ENCODE measurements at regions of chr9 and their contacts with region 1.

Region 1: GRCh38 chr9:6757456-6758247 is at the start of gene KDM4C:
- DNase-seq: peak; percentile 97
- ATAC-seq: peak; percentile 86
- H3K4me3 Mint-ChIP-seq: peak within 1 kb of the TSS; percentile 93
- H3K27ac Mint-ChIP-seq: peak within 1 kb of the TSS; percentile 100
- H3K4me1 Mint-ChIP-seq: peaks cover 22% of the 10 kb centered on the region
- H3K27me3 Mint-ChIP-seq: no peaks in the 10 kb centered on the region
- total RNA-seq, gene KDM4C: 75.2 to 77.1 TPM

Region 2: DNA sequence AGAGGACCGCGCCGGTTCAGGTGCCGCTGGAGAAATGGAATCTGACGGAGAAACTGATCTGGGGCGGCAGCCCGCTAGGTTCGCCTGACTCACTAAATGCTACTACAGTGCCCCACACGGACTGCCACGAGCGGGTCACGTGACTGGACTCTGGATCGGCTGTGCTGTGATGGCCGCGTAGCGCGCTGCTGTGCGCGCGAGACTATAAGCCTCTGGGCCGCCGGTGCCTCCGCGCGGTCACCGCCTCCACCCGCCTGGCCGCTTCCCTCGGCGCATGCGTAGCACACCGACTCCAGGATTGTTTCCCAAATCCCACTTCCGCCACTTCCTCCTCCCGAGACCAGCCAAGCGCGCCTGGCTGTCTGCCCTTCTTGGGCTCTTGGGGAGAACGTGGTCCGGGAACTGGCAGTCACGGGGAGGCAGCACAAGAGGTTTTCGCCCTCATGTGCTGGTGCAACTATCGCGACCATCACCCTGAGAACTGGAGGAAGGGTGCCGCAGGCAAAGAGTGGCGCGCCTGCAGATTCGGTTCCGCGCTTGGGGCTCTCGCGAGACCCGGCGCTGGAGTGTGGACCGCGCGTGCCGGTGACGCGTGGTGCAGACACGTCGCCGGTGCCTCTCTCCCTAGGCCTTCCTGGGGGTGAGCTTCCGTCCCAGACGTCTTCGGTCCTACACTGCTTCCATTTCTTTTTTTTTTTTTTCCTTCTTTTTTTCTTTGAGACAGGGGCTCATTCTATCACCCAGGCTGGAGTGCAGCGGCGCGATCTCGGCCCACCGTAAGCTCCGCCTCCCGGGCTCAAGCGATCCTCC is 76.3 kb before region 1 on chr9:
- POLR2A ChIA-PET with region 1: interaction called, 55 read pairs
- DNase-seq: peak; percentile 90
- ATAC-seq: peak; percentile 92
- H3K4me3 Mint-ChIP-seq: peak overlapping the region; percentile 91
- H3K27ac Mint-ChIP-seq: peak overlapping the region; percentile 99
- H3K4me1 Mint-ChIP-seq: peaks cover 17% of the 10 kb centered on the region
- H3K27me3 Mint-ChIP-seq: no peaks in the 10 kb centered on the region

Region 3: DNA sequence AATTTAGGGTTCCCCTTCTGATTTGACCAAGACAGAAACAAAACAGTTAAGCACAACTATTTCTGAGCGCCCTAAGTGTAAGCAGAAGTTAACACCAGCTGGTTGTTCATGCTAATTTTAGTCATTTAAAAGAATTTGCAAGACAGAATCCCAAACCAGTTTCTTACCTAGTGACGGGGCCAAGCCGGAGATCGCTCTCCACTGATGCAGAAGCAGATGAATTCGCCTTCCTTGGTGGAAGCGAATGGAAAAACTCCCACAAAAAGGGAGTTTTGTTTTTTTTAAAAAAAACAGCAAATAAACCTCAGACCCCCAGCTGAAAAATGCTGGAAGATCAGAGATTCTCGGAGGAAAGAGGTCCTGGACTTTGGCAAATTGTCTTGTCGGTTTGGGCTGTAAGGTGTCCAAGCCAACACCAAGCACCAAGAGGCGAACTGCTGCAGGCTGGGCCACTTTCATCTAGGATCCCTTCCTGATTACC is 64.7 kb before region 1 on chr9:
- POLR2A ChIA-PET with region 1: no interaction called
- DNase-seq: no peak
- ATAC-seq: no peak
- H3K4me3 Mint-ChIP-seq: no peak overlapping the region
- H3K27ac Mint-ChIP-seq: no peak overlapping the region
- H3K4me1 Mint-ChIP-seq: peaks cover 6% of the 10 kb centered on the region
- H3K27me3 Mint-ChIP-seq: no peaks in the 10 kb centered on the region

Region 4: DNA sequence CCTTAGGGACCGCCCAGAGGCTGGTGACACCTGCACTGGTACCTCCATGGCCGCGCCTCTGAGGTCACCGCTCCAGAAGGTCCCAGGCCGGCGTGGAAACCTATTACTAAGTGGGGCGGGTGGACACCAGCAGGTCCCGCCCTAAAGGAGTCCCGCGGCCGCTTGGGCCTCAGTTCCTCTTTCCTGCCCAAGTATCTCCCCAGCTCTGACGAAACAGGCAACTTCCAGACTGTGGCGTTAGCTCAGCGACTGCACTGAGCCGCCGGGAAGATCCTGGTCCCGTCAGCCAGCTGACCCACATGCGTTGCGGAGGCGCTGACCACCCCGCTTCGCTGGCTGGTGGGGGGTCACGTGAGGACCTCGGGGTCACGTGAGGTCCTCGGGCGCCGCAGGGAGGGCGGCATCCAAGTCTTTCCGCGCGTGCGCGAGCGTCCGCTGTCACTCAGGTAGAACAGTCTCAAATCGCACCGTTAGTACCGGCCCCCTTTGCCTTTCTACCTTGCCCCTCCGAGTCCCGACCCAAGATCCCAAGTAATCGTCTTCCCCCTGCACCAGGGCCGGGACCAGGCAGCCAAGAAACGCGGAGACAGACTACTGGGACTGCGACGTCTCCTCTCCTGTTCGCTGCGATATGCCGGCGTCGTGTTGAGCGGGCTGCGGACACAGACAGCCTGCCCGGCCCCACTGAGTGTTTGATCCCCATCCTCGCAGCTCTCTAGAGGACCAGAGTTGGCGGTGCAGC is 53.6 kb before region 1 on chr9:
- POLR2A ChIA-PET with region 1: interaction called, 28 read pairs
- DNase-seq: peak; percentile 89
- ATAC-seq: peak; percentile 92
- H3K4me3 Mint-ChIP-seq: peak overlapping the region; percentile 94
- H3K27ac Mint-ChIP-seq: peak overlapping the region; percentile 93
- H3K4me1 Mint-ChIP-seq: peaks cover 13% of the 10 kb centered on the region
- H3K27me3 Mint-ChIP-seq: no peaks in the 10 kb centered on the region

Region 5: GRCh38 chr9:6715755-6716643 is 41.7 kb before region 1 on chr9:
- POLR2A ChIA-PET with region 1: interaction called, 67 read pairs
- DNase-seq: peak; percentile 83
- ATAC-seq: peak; percentile 93
- H3K4me3 Mint-ChIP-seq: peak overlapping the region; percentile 85
- H3K27ac Mint-ChIP-seq: peak overlapping the region; percentile 92
- H3K4me1 Mint-ChIP-seq: peaks cover 6% of the 10 kb centered on the region
- H3K27me3 Mint-ChIP-seq: no peaks in the 10 kb centered on the region

Region 6: DNA sequence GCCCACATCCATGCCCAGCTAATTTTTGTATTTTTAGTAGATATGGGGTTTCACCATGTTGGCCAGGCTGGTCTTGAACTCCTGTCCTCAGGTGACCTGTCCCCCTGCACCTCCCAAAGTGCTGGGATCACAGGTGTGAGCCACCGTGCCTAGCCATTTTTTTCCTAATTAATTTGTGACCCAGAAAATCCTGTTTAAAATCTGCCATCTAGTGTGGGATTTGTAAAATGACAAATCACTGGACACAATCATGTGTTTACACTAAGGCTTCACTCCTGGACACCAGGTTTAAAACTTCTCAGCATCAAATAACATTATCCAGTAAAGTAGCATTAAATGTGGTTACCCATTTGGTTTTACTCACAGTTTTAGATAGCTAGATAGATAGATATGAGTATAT is 18.4 kb before region 1 on chr9:
- POLR2A ChIA-PET with region 1: interaction called, 13 read pairs
- DNase-seq: no peak
- ATAC-seq: no peak
- H3K4me3 Mint-ChIP-seq: no peak overlapping the region
- H3K27ac Mint-ChIP-seq: no peak overlapping the region
- H3K4me1 Mint-ChIP-seq: no peaks in the 10 kb centered on the region
- H3K27me3 Mint-ChIP-seq: no peaks in the 10 kb centered on the region

Region 7: GRCh38 chr9:6782981-6783380 is 25.3 kb after region 1 on chr9:
- POLR2A ChIA-PET with region 1: interaction called, 12 read pairs
- DNase-seq: no peak
- ATAC-seq: peak; percentile 67
- H3K4me3 Mint-ChIP-seq: peak overlapping the region; percentile 51
- H3K27ac Mint-ChIP-seq: no peak overlapping the region
- H3K4me1 Mint-ChIP-seq: peaks cover 28% of the 10 kb centered on the region
- H3K27me3 Mint-ChIP-seq: no peaks in the 10 kb centered on the region

Measured in activated naive CD8-positive, alpha-beta T cell treated with anti-CD3 and anti-CD28 coated beads, Interleukin-2, amount 10 ng/mL, durations not matched to agents 7 days and 5 days (primary cell).